H1 (cell line): ENCODE measurements at regions of chr9 and their contacts with region 1.

Region 1: DNA sequence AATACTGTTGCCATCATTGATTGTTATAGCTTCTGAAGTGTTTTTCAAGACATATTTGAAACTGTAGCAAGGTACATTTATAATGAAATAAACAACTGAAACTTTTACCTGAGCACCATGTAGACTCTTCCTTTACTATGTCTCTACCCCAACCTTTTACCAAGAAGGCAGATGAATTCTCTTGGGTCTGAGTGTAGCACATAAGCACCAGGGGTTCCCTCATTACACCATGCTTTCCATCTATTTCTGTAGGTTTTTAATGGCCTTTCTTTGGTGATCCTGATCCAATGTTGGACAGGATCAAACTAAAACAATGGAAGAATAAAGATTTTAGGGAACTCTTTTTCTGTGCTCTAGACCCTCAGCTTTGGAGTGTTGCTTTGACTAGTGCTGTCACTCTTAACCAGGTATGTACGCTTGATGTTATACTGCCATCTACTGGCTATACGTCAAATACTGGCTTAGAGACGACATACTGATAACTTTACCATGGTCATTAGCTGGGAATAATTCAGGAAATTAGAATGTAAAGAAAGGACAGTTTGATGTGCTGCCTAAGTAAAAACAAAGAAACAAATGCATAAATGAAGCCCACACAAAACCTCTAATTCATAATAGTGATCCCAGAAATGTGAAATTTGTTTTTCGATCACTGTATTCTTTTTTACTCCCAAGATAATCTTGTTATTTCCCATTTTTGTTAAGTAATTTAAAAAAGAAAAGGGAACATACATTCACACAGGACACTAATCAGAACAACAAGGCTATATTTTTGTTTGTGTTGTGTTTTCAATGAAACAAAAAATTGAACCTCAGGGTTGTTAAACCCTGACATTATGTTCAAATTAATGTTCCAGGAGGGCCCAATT is 30.7 kb downstream of the IFNW1 start:
- DNase-seq: no peak
- H3K4me3 ChIP-seq: no peak overlapping the region
- H3K27ac ChIP-seq: no peak overlapping the region
- H3K4me1 ChIP-seq: no peaks in the 10 kb centered on the region
- H3K27me3 ChIP-seq: no peaks in the 10 kb centered on the region
- CTCF ChIP-seq: peak in 2 of 3 experiments; percentile 74 to 86; a peak in 3 of 4 replicates
- EP300 ChIP-seq: no peak
- POLR2A ChIP-seq: no peak
- RAD21 ChIP-seq: peak; percentile 97

Region 2: DNA sequence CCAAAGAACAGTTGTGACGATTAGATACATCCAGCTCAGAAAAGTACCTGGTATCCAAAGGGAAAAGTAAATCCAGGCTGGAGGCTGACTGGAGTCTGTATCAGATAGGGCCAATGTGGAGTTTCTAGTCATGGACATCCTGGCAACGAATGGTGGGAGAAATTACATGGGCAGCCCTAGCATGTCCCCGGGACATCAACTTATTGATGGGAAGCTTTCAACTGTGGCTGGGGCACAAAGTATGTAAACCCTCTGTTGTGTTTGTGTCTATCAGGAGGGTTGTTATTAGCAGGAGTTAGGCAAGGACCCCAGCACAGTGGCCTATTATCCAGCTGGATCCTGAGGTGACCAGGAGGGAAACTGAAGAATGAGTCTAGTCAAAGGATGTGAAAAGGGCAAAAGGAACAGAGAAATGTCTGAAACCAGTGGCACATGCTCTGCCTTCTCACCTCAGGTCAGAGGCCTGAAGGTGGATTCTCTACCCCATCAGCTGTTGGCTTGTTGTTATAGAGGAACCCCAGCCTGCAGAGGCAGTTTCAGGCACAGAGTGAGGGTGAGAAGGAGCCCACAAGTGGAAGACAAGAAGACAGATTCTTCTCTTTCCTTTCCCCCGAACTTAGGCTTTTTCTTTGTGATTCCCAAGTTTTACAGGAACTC is 10.8 kb after region 1 on chr9:
- CTCF ChIA-PET with region 1: interaction called, 13 read pairs
- POLR2A ChIA-PET with region 1: no interaction called
- DNase-seq: no peak
- H3K4me3 ChIP-seq: no peak overlapping the region
- H3K27ac ChIP-seq: no peak overlapping the region
- H3K4me1 ChIP-seq: no peaks in the 10 kb centered on the region
- H3K27me3 ChIP-seq: no peaks in the 10 kb centered on the region; a peak in 1 of 7 replicates
- CTCF ChIP-seq: no peak
- EP300 ChIP-seq: no peak
- POLR2A ChIP-seq: no peak
- RAD21 ChIP-seq: no peak

Region 3: DNA sequence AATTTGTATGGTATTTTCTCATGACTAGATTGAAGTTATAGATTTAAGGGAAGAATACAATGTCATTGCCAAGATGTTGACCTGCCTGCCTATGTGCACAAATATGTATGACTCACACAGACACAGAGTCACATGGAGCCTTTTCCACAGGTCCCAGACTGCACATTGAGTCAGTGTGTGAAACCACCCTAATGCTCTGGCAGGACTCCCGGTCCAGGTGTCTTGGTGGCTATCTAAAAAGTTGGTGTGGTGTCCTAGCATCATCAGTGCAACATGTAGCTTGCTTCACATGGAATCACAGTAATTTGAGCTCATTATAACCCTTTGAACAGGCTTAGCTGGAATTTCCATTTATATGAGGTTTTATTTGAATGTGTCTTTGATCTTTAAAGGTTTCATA is 183.4 kb after region 1 on chr9:
- CTCF ChIA-PET with region 1: no interaction called
- POLR2A ChIA-PET with region 1: no interaction called
- DNase-seq: no peak
- H3K4me3 ChIP-seq: no peak overlapping the region
- H3K27ac ChIP-seq: no peak overlapping the region
- H3K4me1 ChIP-seq: no peaks in the 10 kb centered on the region
- H3K27me3 ChIP-seq: no peaks in the 10 kb centered on the region
- CTCF ChIP-seq: no peak
- EP300 ChIP-seq: no peak
- POLR2A ChIP-seq: no peak
- RAD21 ChIP-seq: no peak